Right cardiac atrium (tissue), 5 donors: ENCODE measurements at regions of chr12 and their contacts with region 1.

Region 1: GRCh38 chr12:76031537-76032073 is at the start of gene PHLDA1:
- DNase-seq: peak; percentile 94 to 98 (median 97)
- ATAC-seq: peak; percentile 94 to 96
- H3K4me3 ChIP-seq: peak within 1 kb of the TSS; percentile 86
- H3K27ac ChIP-seq: peak within 1 kb of the TSS; percentile 95
- H3K4me1 ChIP-seq: peaks cover 5% of the 10 kb centered on the region
- H3K27me3 ChIP-seq: no peaks in the 10 kb centered on the region
- total RNA-seq, gene PHLDA1: 2.0 to 5.9 (median 3.5) TPM

Region 2: DNA sequence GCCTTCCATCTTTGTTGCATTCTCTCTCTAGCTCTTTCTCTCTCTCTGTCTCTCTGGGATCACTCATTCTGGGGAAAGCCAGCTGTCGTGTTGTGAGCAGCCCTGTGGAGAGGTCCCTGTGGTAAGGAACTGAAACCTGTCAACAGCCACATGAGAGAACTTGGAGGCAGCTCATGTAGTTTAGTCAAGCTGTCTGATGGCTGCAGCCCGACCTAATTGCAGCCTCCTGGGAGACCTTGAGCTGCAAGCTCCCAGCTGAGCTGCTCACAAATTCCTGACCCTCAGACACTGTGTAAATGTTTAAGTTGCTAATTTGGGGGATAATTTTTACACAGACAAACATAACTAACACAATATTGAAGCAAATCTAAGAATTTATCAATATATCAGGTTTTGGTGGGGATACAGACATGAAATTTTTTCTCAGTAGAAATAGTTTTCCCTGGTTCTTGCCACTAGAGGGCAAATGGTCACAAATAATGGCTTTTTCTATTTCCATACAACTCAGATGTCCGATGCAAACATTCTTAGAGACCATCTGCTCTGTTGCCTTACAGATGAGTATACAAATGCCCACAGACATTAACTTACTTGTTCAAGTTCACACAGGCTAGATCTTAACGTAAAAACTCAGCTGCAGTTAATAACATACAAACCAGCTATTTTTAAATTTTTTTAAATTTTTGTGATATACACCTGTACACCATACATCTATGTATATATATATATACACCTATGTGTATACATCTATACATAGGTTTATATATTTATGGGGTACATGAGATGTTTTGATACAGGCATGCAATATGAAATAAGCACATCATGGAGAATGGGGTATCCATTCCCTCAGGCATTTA is 504.7 kb before region 1 on chr12:
- intact Hi-C with region 1: loop called in 3 of 4 experiments (anchors 5 to 10 kb)
- DNase-seq: no peak
- ATAC-seq: no peak
- H3K4me3 ChIP-seq: no peak overlapping the region
- H3K27ac ChIP-seq: no peak overlapping the region
- H3K4me1 ChIP-seq: no peaks in the 10 kb centered on the region
- H3K27me3 ChIP-seq: no peaks in the 10 kb centered on the region

Region 3: GRCh38 chr12:75553398-75553797 is 478.2 kb before region 1 on chr12:
- intact Hi-C with region 1: loop called in 2 of 4 experiments (anchors 10 kb)
- DNase-seq: no peak
- ATAC-seq: peak in 1 of 2 donors; percentile 75
- H3K4me3 ChIP-seq: no peak overlapping the region
- H3K27ac ChIP-seq: no peak overlapping the region
- H3K4me1 ChIP-seq: peaks cover 2% of the 10 kb centered on the region
- H3K27me3 ChIP-seq: no peaks in the 10 kb centered on the region

Region 4: DNA sequence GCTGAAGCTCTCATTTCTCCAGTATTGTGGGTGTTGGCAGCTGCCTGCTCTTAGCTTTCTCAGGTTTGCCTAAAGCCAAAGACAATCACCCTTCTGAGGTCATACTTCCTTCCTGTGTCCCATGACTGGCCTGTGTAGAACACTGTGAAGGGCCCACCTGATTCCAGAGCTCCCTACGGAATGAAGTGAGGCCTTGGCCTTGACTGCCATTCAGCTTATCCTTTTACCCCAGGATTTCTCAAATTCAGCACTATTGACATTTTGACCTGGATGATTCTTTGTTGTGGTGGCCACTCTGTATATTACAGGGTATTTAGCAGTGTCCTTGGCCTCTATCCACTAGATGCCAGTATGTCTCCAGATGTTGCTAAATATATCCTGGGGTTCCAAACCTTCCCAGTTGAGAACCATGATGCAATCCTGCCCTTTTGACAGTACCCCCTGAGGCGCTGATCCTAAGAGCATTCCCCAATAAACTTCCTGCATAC is 407.9 kb before region 1 on chr12:
- intact Hi-C with region 1: loop called in 1 of 4 experiments (anchors 10 kb)
- DNase-seq: peak in 1 of 3 donors; percentile 12
- ATAC-seq: peak; percentile 71 to 86
- H3K4me3 ChIP-seq: no peak overlapping the region
- H3K27ac ChIP-seq: no peak overlapping the region
- H3K4me1 ChIP-seq: peaks cover 2% of the 10 kb centered on the region
- H3K27me3 ChIP-seq: no peaks in the 10 kb centered on the region

Region 5: DNA sequence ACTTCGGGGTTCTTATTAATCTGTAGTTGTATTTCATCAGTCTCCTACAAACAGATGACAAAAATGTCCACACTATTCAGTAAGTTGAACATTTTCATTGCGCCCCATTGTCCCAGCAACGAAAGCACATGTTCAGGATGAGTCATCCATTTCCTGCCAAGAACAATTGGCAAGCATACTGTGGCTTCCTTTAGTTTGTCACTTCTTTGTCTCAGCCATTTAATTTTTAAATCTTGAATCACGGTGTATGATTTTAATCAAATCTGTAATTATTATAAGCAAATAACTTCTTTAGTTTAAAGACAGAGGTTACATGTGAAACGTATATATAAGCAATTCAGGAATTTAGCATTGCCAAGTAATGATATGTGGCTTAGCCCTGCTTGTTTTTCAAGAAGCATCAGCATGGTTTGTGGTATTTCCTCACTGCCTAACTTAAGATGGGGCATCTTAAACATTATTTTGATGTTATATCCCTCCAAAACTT is 308.8 kb before region 1 on chr12:
- intact Hi-C with region 1: loop called in 1 of 4 experiments (anchors 10 kb)
- DNase-seq: peak in 2 of 3 donors; percentile 45 to 57
- ATAC-seq: peak; percentile 82 to 92
- H3K4me3 ChIP-seq: no peak overlapping the region
- H3K27ac ChIP-seq: no peak overlapping the region
- H3K4me1 ChIP-seq: peaks cover 8% of the 10 kb centered on the region
- H3K27me3 ChIP-seq: no peaks in the 10 kb centered on the region

Region 6: DNA sequence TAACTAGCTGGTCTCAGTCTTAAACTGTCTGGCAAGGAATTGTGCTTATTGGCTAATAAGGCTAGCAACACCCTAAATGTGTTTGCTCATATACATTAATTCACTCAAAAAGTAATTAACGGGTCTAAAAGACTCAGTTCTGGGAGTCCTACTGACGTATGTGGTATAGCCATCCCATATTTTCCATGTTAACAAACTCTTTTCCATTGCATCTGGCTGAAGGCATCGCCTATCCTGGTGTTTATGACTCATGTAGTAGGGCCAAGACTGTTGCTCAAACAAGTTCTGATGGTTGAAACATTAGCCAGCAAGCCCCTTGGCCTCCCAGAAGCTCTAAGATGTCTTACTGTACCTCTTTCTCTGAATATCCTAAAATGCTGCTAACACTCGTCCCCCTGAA is 98.5 kb before region 1 on chr12:
- intact Hi-C with region 1: loop called in 2 of 4 experiments (anchors 5 to 10 kb)
- DNase-seq: no peak
- ATAC-seq: peak in 1 of 2 donors; percentile 40
- H3K4me3 ChIP-seq: no peak overlapping the region
- H3K27ac ChIP-seq: no peak overlapping the region
- H3K4me1 ChIP-seq: peaks cover 4% of the 10 kb centered on the region
- H3K27me3 ChIP-seq: no peaks in the 10 kb centered on the region

Region 7: DNA sequence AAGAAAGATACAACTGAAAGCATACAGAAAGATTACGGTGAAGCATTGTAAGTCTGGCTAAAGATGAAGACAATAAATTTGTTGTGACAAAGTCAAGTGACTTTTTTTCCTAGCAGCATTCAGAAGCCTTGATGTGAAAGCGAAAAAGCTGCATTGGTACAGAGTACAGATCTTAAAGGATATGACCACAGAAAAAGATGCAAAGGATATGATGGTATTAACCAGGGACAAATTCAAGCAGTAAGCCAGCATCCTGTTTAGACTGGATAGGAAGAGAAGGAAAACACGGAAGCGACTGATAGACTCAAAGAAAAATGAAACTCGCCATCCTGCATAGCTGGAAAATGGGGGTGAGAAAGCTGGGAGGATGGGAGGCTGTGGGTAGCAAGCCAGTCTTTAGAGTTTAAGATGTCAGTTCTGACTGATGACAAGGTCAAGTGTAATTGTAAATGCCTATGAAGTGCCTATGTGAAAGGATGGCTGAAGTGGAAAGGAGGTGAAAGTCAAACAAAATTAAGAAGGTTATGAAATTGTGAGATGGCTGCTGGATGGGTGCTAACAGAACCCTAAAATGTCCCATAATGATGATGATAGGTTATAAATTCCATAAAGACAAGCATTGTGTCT is 92.5 kb before region 1 on chr12:
- intact Hi-C with region 1: loop called in 2 of 4 experiments (anchors 5 to 10 kb)
- DNase-seq: no peak
- ATAC-seq: no peak
- H3K4me3 ChIP-seq: no peak overlapping the region
- H3K27ac ChIP-seq: no peak overlapping the region
- H3K4me1 ChIP-seq: no peaks in the 10 kb centered on the region
- H3K27me3 ChIP-seq: no peaks in the 10 kb centered on the region